RWPE1 (cell line): ENCODE measurements at regions of chr5 and their contacts with region 1.

Region 1: DNA sequence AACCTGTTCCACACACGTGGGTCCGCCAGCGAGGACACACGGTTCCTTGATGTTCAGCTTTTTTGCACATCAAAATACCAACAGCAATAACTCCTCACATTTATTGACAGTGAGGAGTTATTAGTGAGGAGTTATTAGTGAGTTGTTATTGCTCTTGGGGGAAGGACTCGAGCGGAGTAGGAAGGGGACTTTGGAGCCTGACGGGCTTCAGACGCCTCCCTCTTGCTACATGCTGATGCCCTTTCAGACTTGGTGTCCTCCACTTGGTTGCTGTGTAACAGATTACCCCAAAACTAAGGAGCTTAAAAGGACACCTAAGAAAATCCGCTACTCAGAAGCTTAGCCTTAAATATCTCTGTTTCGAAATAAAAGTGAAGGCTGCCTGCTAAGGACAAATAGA is 181.9 kb upstream of the MSX2 start:
- DNase-seq: no peak
- H3K27ac ChIP-seq: no peak overlapping the region
- CTCF ChIP-seq: no peak

Region 2: GRCh38 chr5:174693713-174694385 is 151.4 kb after region 1 on chr5:
- CTCF ChIA-PET with region 1: no interaction called
- POLR2A ChIA-PET with region 1: interaction called, 12 read pairs
- DNase-seq: no peak
- H3K27ac ChIP-seq: no peak overlapping the region
- CTCF ChIP-seq: no peak

Region 3: GRCh38 chr5:174751154-174752000 is 208.9 kb after region 1 on chr5:
- CTCF ChIA-PET with region 1: no interaction called
- POLR2A ChIA-PET with region 1: no interaction called
- DNase-seq: peak; percentile 30
- H3K27ac ChIP-seq: no peak overlapping the region
- CTCF ChIP-seq: no peak